Mammary epithelial cell (primary cell): ENCODE measurements at regions of chr12 and their contacts with region 1.

Region 1: GRCh38 chr12:31331242-31331641 is 5.3 kb upstream of the SINHCAF start:
- DNase-seq: no peak
- H3K4me3 ChIP-seq: no peak overlapping the region
- H3K27ac ChIP-seq: no peak overlapping the region
- H3K4me1 ChIP-seq: no peaks in the 10 kb centered on the region
- H3K27me3 ChIP-seq: peaks cover 4% of the 10 kb centered on the region
- CTCF ChIP-seq: no peak

Region 2: DNA sequence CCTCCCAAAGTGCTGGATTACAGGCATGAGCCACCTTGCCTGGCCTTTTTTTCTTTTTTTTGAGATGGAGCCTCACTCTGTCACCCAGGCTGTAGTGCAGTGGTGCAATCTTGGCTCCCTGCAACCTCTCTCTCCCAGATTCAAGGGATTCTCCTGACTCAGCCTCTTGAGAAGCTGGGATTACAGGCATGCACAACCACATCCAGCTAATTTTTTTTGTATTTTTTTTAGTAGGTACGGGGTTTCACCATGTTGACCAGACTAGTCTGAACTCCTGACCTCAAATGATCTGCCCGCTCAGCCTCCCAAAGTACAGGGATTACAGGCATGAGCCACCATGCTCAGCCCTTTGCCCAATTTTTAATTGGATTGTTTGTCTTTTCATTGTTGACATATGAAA is 63.3 kb before region 1 on chr12:
- CTCF ChIA-PET with region 1: no interaction called
- dilution Hi-C with region 1: no loop called
- in situ Hi-C with region 1: no loop called
- intact Hi-C with region 1: no loop called
- DNase-seq: no peak
- H3K4me3 ChIP-seq: no peak overlapping the region
- H3K27ac ChIP-seq: no peak overlapping the region
- H3K4me1 ChIP-seq: no peaks in the 10 kb centered on the region
- H3K27me3 ChIP-seq: no peaks in the 10 kb centered on the region
- CTCF ChIP-seq: no peak

Region 3: GRCh38 chr12:31362759-31363415 is 31.6 kb after region 1 on chr12:
- CTCF ChIA-PET with region 1: no interaction called
- dilution Hi-C with region 1: no loop called
- in situ Hi-C with region 1: no loop called
- intact Hi-C with region 1: no loop called
- DNase-seq: peak; percentile 37
- H3K4me3 ChIP-seq: peak overlapping the region in 1 of 3 experiments; percentile 15
- H3K27ac ChIP-seq: no peak overlapping the region
- H3K4me1 ChIP-seq: peaks cover 26% of the 10 kb centered on the region
- H3K27me3 ChIP-seq: no peaks in the 10 kb centered on the region
- CTCF ChIP-seq: peak in 1 of 2 donors; percentile 32

Region 4: DNA sequence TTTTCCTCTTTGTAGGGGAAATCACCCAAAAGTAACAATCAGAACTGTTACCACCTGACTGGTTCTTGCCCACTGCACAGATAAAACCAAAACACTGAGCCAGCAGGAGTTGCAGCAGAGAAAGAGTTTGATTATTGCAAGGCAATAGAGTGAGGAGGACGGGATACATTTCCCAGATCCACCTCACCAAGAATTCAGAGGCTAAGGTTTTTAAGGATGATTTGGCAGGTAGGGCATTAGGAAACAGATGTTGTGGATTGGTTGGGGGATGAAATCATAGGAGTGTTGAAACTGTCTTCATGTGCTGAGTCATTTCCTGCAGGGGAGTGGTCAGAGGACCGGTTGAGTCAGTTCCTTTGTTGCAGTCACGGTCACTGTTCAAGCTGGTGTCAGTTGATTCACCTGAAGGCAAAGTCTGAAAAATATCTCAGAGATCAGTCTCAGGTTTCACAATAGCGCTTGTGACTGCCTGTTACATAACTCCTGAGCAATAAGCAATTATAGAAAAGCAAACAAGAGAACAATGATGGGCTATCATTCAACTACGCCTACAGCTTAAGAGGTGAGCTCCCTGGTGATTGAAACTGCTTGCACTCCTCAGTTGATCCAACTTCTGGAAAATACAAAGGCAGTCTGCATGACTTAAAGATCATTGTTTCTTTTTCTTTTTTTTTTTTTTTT is 417.9 kb after region 1 on chr12:
- CTCF ChIA-PET with region 1: no interaction called
- dilution Hi-C with region 1: no loop called
- in situ Hi-C with region 1: no loop called
- intact Hi-C with region 1: no loop called
- DNase-seq: peak; percentile 100
- H3K4me3 ChIP-seq: no peak overlapping the region
- H3K27ac ChIP-seq: peak overlapping the region; percentile 91
- H3K4me1 ChIP-seq: peaks cover 15% of the 10 kb centered on the region
- H3K27me3 ChIP-seq: no peaks in the 10 kb centered on the region
- CTCF ChIP-seq: no peak

Region 5: DNA sequence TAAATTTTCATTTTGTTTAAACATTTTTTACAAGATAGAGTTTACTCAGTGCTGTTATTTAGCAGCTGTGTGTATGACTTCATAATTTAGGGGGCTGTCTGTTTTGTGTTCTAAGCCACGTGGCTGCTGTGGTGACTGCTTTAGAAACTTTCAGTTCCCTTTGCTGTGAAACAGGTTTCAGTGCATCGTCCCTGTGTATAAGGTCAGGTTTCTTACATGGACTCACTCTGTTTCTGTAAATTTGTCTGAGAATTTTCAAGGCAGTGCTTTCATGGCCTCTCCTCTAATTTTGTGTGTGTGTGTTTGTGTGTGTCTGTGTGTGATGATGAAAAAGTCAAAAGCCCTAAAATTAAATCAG is 807.8 kb after region 1 on chr12:
- CTCF ChIA-PET with region 1: no interaction called
- dilution Hi-C with region 1: no loop called
- in situ Hi-C with region 1: no loop called
- intact Hi-C with region 1: loop called (anchors 5 kb)
- DNase-seq: no peak
- H3K4me3 ChIP-seq: no peak overlapping the region
- H3K27ac ChIP-seq: no peak overlapping the region
- H3K4me1 ChIP-seq: peaks cover 6% of the 10 kb centered on the region
- H3K27me3 ChIP-seq: no peaks in the 10 kb centered on the region
- CTCF ChIP-seq: no peak